ENCODE measurements at regions of chr14 and their contacts with region 1.

Region 1: DNA sequence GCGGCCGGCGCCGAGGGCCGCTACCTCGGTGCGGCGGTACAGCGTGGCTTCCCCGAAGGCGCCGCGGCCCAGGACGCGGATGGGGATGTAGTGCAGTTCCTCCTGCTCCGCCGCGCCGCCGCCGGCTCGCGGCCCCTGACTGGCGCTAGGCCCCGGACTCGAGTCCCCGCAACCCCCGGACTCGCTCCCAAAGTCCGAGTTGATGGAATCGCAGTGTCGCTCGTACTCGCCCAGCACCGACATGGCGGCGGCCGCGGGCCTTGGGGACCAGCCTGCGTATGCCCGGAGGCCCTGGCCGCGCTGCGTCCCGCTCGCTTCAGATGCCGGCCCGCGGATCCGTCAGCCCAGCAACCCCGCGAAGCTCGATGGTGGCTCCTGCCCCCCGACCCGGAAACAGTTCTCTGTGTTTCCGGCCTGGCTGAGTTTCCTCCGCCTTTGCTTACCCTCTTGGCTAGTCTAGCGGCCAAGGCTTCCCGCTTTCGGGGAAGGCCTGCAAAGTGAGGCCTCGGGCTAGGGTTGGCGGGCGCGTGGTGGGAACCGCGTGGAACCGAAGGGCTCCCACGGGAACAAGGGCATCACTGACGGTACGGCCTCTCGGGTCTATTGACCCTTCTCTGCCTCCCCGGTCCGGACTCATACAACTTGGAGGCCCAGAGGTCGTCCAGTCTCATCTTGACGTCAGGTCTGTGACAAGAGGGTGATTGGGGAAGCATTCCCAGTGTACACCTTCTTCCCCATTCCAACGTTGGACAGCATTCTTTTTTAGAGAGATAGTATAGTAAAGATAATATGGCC is at the start of gene NEK9:
- DNase-seq: peak; percentile 82
- total RNA-seq, gene NEK9: 34.4 and 44.0 TPM in 2 replicates

Region 2: GRCh38 chr14:74531467-74531866 is 595.4 kb before region 1 on chr14:
- in situ Hi-C with region 1: no loop called
- DNase-seq: no peak

Region 3: DNA sequence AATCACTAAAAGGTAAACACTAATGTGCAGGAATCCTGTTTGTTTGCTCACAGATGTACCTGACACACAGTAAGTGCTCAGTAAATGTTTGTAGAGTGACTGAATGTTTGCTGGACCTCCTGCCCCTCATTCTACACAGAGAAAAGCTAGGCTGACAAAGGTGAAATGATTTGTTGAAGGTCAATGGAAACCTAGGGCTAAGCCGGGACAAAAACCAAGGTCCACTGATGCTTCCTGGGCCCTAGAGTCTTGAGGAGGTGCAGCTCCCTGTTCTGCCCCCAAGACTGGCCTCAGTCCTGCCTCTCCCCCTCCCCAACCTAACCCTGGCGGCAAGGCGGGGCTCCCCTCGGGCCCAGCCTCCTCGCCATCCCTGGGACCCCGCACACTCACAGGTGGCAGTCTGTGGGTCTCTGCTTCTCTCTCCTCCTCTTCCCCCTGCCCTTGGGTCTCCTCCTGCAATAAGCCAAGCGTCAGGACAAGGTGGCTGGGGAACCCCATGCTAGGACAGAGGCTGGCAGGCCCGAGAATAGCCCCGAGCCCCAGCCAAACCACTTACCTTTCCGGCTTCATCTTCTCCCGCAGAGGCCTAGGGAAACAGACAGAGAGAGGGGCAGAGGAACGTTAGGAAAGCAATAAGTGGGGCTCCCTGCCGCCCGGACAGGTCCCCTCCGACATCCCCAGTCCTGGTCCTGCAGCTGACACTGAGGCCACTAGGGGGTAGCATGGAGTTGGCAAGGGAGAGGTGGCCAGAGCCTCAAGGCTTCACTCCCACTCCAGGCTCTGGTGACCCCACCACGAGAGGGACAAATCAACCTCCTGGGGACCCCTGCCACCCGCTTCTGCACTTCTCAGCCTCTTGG is 180.8 kb before region 1 on chr14:
- in situ Hi-C with region 1: no loop called
- DNase-seq: peak; percentile 41

Region 4: DNA sequence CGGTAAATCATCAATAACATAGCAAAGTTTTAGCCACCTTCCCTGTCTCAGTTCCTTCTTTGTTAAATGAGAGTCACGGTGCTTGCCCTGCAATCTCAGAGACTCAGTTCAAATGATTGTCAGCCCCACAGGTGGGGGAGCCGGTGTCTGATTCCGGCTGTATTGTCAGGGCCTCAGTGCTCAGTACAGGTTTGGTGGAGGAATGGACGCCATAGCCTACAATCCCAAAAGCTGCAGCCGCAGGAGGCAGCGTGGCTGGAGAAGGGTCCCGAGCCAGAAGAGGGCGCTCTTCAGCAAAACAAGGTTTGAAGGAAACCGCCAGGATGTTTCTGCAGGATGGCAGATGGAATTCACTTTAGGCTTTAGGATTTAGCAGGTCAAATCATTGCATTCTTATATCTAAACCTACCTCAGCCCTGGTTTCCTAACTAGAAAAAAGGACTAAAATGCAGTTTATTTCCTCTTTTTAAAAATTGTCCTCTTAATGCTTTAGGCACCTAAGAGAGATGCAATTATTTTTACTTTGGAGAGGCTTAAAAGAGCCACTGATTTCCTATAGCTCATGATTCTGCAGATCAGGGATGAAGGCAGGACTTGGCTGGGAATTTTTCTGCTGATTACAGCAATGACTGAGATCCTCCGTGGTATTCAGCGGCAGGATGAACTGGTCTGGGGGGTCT is 181.0 kb after region 1 on chr14:
- in situ Hi-C with region 1: loop called (anchors 10 kb)
- DNase-seq: peak; percentile 53

Region 5: GRCh38 chr14:75560962-75561432 is 434.1 kb after region 1 on chr14:
- in situ Hi-C with region 1: loop called (anchors 25 kb)
- DNase-seq: peak; percentile 81